ENCODE measurements at regions of chr3 and their contacts with region 1.

Region 1: DNA sequence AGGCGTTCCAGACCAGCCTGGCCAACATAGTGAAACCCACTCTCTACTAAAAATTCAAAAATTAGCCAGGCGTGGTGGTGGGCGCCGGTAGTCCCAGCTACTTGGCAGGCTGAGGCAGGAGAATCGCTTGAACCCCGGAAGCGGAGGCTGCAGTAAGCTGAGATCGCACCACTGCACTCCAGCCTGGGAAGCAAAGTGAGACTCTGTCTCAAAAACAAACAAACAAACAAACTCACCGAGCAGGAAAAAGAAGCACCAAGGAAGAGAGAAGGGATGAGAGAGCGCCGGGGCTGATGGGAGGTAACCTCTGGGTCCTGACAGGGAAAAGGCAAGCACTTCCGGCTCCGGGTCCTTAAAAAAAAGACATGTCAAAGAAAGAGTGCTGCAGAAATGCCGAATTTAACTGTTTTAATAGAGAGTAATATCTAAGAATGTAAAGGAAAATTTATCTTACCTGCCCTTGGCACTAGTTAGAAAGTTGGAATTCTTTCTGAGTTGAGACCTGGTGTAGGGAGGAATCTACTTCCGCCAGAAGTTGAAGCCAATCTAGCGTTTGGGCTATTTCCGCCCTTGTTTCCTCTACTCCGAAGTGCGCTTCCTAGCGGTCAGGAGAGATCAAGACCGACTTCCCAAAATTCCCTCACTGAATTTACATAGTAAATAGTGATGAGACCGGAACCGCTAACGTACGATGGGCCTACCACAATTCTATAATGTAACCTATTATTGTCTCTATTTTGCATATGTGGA is 29.1 kb downstream of the EFCAB12 start:
- DNase-seq: peak; percentile 93
- H3K4me3 Mint-ChIP-seq: peak overlapping the region; percentile 91
- H3K27ac Mint-ChIP-seq: peak overlapping the region; percentile 92
- H3K4me1 Mint-ChIP-seq: peaks cover 31% of the 10 kb centered on the region
- H3K27me3 Mint-ChIP-seq: no peaks in the 10 kb centered on the region

Region 2: GRCh38 chr3:128650096-128651050 is 748.9 kb before region 1 on chr3 and contains the start of gene RPN1:
- intact Hi-C with region 1: loop called (anchors 1 kb)
- DNase-seq: peak; percentile 98
- H3K4me3 Mint-ChIP-seq: peak within 1 kb of the TSS; percentile 88
- H3K27ac Mint-ChIP-seq: peak within 1 kb of the TSS; percentile 92
- H3K4me1 Mint-ChIP-seq: peaks cover 32% of the 10 kb centered on the region
- H3K27me3 Mint-ChIP-seq: no peaks in the 10 kb centered on the region
- total RNA-seq, gene RPN1: 192 and 194 TPM in 2 replicates

Region 3: DNA sequence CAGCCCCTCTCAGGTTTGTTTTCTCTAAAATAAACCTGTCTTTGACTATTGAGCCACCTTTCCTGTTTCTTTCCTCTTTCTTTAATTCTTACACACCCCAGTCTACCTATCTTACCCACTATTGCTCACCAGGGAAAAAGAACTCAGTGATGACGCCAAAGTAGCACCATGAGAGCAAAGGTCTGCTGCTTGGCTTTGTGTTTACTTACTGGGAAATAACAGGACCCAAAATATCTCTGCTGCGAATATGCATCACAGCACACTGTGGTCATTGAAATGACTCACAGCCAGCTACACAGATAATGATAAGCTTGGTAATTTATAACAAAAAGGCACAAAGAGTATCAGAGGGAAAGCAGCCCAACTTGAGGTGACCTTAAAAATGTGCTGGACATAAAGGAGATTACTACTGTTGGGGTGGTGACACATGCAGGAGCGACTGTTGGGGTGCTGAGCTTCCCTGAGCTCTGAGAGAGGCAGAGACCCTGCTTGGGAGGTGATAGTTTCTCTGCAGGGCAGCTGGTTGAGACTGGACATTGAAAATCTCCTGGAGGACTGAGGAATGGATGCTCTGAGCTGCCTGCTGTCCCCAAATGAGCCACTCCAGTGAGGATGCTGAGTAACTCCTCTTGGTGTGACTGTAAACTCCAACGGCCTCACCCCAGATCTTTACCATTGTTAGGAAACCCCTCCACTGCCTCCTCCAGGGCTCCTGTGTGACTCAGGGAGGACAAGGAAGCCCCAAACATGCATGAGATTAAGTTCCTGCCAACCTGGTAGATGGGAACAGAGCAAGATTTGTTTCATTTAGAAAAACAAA is 14.6 kb after region 1 on chr3:
- intact Hi-C with region 1: no loop called
- DNase-seq: no peak
- H3K4me3 Mint-ChIP-seq: no peak overlapping the region
- H3K27ac Mint-ChIP-seq: no peak overlapping the region
- H3K4me1 Mint-ChIP-seq: no peaks in the 10 kb centered on the region
- H3K27me3 Mint-ChIP-seq: peaks cover 4% of the 10 kb centered on the region

Region 4: GRCh38 chr3:129428376-129429079 is 29.2 kb after region 1 on chr3 and contains the start of gene EFCAB12:
- intact Hi-C with region 1: loop called (anchors 1 kb)
- DNase-seq: peak; percentile 97
- H3K4me3 Mint-ChIP-seq: peak within 1 kb of the TSS; percentile 78
- H3K27ac Mint-ChIP-seq: peak within 1 kb of the TSS; percentile 52
- H3K4me1 Mint-ChIP-seq: peaks cover 33% of the 10 kb centered on the region
- H3K27me3 Mint-ChIP-seq: peaks cover 3% of the 10 kb centered on the region
- total RNA-seq, gene EFCAB12: 0.40 and 0.63 TPM in 2 replicates